Activated naive CD4-positive, alpha-beta T cell treated with anti-CD3 and anti-CD28 coated beads for 36 hours (primary cell): ENCODE measurements at regions of chr9 and their contacts with region 1.

Region 1: GRCh38 chr9:4970970-4971641 is 14.0 kb upstream of the JAK2 start:
- DNase-seq: peak; percentile 91
- H3K4me3 Mint-ChIP-seq: no peak overlapping the region
- H3K27ac Mint-ChIP-seq: no peak overlapping the region
- H3K4me1 Mint-ChIP-seq: peaks cover 23% of the 10 kb centered on the region
- H3K27me3 Mint-ChIP-seq: no peaks in the 10 kb centered on the region

Region 2: GRCh38 chr9:4750023-4750673 is 221.0 kb before region 1 on chr9:
- CTCF ChIA-PET with region 1: no interaction called
- intact Hi-C with region 1: loop called (anchors 1 kb)
- DNase-seq: no peak
- H3K4me3 Mint-ChIP-seq: no peak overlapping the region
- H3K27ac Mint-ChIP-seq: no peak overlapping the region
- H3K4me1 Mint-ChIP-seq: peaks cover 34% of the 10 kb centered on the region
- H3K27me3 Mint-ChIP-seq: no peaks in the 10 kb centered on the region

Region 3: DNA sequence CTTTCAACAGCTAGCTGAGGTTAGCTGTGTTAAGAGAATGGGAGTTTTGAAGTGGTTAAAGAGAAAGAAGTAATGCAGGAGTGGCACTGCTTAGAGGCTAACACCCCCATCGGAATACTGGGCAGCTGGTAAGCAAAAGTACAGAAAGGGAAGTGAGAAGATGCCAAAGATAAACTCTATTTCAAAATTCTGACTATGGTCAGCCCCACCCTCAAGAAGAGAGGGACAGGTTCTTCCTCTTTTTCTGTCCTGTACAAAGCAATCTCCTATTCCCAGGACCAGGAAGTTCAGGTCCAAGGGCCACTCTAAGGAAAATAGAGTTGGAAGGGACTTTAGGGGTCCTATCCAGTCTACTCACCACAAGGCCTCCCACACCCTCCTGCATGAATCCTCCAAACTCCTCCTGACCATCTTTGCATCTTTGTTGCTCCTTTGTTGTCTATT is 32.0 kb before region 1 on chr9:
- CTCF ChIA-PET with region 1: interaction called, 3 read pairs
- intact Hi-C with region 1: loop called (anchors 1 kb)
- DNase-seq: no peak
- H3K4me3 Mint-ChIP-seq: no peak overlapping the region
- H3K27ac Mint-ChIP-seq: peak overlapping the region; percentile 88
- H3K4me1 Mint-ChIP-seq: peaks cover 79% of the 10 kb centered on the region
- H3K27me3 Mint-ChIP-seq: no peaks in the 10 kb centered on the region

Region 4: GRCh38 chr9:5851445-5851844 is 880.3 kb after region 1 on chr9:
- CTCF ChIA-PET with region 1: no interaction called
- intact Hi-C with region 1: loop called (anchors 2 kb)
- DNase-seq: peak; percentile 73
- H3K4me3 Mint-ChIP-seq: no peak overlapping the region
- H3K27ac Mint-ChIP-seq: peak overlapping the region; percentile 26
- H3K4me1 Mint-ChIP-seq: peaks cover 41% of the 10 kb centered on the region
- H3K27me3 Mint-ChIP-seq: no peaks in the 10 kb centered on the region